Activated CD4-positive, alpha-beta memory T cell treated with anti-CD3 and anti-CD28 coated beads for 36 hours (primary cell): ENCODE measurements at regions of chrX and their contacts with region 1.

Region 1: GRCh38 chrX:39149761-39150160 is 348.5 kb downstream of the MID1IP1 start:
- DNase-seq: peak; percentile 70
- H3K4me3 Mint-ChIP-seq: no peak overlapping the region
- H3K27ac Mint-ChIP-seq: no peak overlapping the region
- H3K4me1 Mint-ChIP-seq: no peaks in the 10 kb centered on the region
- H3K27me3 Mint-ChIP-seq: no peaks in the 10 kb centered on the region

Region 2: GRCh38 chrX:38754102-38754790 is 395.5 kb before region 1 on chrX:
- CTCF ChIA-PET with region 1: interaction called, 4 read pairs
- POLR2A ChIA-PET with region 1: no interaction called
- intact Hi-C with region 1: loop called (anchors 1 kb)
- DNase-seq: peak; percentile 31
- H3K4me3 Mint-ChIP-seq: no peak overlapping the region
- H3K27ac Mint-ChIP-seq: no peak overlapping the region
- H3K4me1 Mint-ChIP-seq: no peaks in the 10 kb centered on the region
- H3K27me3 Mint-ChIP-seq: no peaks in the 10 kb centered on the region

Region 3: DNA sequence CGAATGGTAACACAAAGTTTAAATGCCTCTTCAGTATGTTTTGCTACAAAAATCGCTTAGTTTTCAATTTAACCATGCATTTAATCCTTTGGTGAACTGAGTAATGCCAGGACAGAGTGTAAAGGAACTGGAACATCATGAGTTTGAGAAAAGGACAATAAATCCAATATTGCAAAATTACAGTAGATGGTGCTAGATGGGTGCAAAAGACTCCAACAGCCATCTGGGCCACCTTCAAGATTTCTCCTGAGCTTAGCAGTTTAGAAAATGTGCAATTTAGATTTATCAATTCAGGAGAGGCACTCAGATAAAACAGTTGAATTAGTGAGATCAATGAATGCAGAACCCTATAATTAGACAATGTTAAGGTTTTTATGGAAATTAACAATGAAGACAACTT is 381.7 kb before region 1 on chrX:
- CTCF ChIA-PET with region 1: interaction called, 14 read pairs
- POLR2A ChIA-PET with region 1: no interaction called
- intact Hi-C with region 1: loop called (anchors 5 kb)
- DNase-seq: no peak
- H3K4me3 Mint-ChIP-seq: no peak overlapping the region
- H3K27ac Mint-ChIP-seq: no peak overlapping the region
- H3K4me1 Mint-ChIP-seq: no peaks in the 10 kb centered on the region
- H3K27me3 Mint-ChIP-seq: no peaks in the 10 kb centered on the region